ENCODE measurements at regions of chr16 and their contacts with region 1.

Region 1: GRCh38 chr16:27235055-27235937 is 32.0 kb downstream of the KDM8 start:
- DNase-seq: peak; percentile 68
- CTCF ChIP-seq: peak; percentile 84

Region 2: GRCh38 chr16:27097800-27098230 is 137.5 kb before region 1 on chr16:
- CTCF ChIA-PET with region 1: no interaction called
- POLR2A ChIA-PET with region 1: no interaction called
- DNase-seq: no peak
- CTCF ChIP-seq: no peak

Region 3: GRCh38 chr16:27179500-27180072 is 55.7 kb before region 1 on chr16:
- CTCF ChIA-PET with region 1: interaction called, 29 read pairs
- POLR2A ChIA-PET with region 1: no interaction called
- DNase-seq: peak; percentile 88
- CTCF ChIP-seq: peak; percentile 95

Region 4: GRCh38 chr16:27222249-27223225 is 12.8 kb before region 1 on chr16:
- CTCF ChIA-PET with region 1: interaction called, 28 read pairs
- POLR2A ChIA-PET with region 1: no interaction called
- DNase-seq: no peak
- CTCF ChIP-seq: no peak

Region 5: DNA sequence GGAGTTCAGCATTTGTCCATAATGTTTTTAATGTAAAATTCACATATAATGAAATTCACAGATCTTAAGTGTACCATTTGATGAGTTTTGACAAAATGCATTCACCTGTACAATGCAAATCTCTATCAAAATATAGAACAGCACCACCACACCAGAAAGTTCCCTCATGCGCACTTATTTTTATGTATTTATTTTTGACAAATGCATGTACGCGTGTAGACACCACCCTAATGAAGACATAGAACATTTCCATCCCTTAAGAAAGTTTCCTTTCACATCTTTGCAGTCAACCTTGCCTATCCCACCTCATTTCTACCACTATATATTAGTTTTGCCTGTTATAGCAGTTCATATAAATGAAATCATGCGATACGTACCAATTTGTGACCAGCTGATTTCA is 62.8 kb after region 1 on chr16:
- CTCF ChIA-PET with region 1: interaction called, 12 read pairs
- POLR2A ChIA-PET with region 1: no interaction called
- DNase-seq: no peak
- CTCF ChIP-seq: no peak

Region 6: GRCh38 chr16:27408012-27408601 is 172.8 kb after region 1 on chr16:
- CTCF ChIA-PET with region 1: interaction called, 12 read pairs
- POLR2A ChIA-PET with region 1: no interaction called
- DNase-seq: peak; percentile 57
- CTCF ChIP-seq: no peak

Region 7: GRCh38 chr16:27458258-27458657 is 223.0 kb after region 1 on chr16:
- CTCF ChIA-PET with region 1: interaction called, 38 read pairs
- POLR2A ChIA-PET with region 1: no interaction called
- DNase-seq: no peak
- CTCF ChIP-seq: no peak

Measured in GM10248 (cell line).